ENCODE measurements at regions of chr7 and their contacts with region 1.

Region 1: GRCh38 chr7:151351027-151351426 is 9.4 kb downstream of the NUB1 start:
- DNase-seq: peak; percentile 70
- H3K4me3 Mint-ChIP-seq: peak overlapping the region; percentile 17
- H3K27ac Mint-ChIP-seq: peak overlapping the region; percentile 91
- H3K4me1 Mint-ChIP-seq: peaks cover 51% of the 10 kb centered on the region
- H3K27me3 Mint-ChIP-seq: no peaks in the 10 kb centered on the region

Region 2: GRCh38 chr7:151057989-151058780 is 292.8 kb before region 1 on chr7:
- CTCF ChIA-PET with region 1: no interaction called
- intact Hi-C with region 1: loop called (anchors 1 kb)
- DNase-seq: peak; percentile 98
- H3K4me3 Mint-ChIP-seq: peak overlapping the region; percentile 85
- H3K27ac Mint-ChIP-seq: peak overlapping the region; percentile 89
- H3K4me1 Mint-ChIP-seq: peaks cover 35% of the 10 kb centered on the region
- H3K27me3 Mint-ChIP-seq: no peaks in the 10 kb centered on the region

Region 3: DNA sequence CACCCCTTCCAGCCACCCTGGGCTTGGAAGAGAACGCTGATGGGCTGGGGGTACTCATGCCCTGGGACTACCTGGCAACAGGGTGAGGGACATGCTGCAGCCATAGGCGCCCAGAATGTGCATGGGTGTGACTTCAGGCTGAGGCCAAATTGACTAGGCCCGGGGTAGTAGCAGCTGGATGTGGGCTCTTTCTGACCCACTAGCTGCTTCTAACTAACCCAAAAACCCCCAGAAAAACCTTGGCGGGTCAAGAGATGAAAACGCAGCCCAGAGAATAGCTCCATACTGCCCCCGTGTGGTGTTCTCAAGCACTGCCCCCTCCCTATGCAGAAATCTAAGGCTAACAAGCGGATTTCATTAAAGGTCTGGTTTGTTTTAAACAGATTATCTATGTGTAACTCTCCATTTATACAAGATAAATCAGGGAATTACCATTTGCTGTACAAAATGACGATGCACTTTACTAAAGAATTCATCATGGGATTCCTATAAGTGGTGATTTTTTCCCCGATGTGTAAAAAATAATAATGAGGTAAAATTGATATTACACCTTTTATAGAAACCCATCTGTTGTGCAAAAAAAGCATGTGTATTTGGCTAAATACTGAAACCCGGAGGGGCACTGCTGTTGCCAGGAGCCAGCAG is 106.7 kb before region 1 on chr7:
- CTCF ChIA-PET with region 1: interaction called, 13 read pairs
- intact Hi-C with region 1: loop called (anchors 1 kb)
- DNase-seq: peak; percentile 81
- H3K4me3 Mint-ChIP-seq: peak overlapping the region; percentile 46
- H3K27ac Mint-ChIP-seq: no peak overlapping the region
- H3K4me1 Mint-ChIP-seq: peaks cover 41% of the 10 kb centered on the region
- H3K27me3 Mint-ChIP-seq: peaks cover 26% of the 10 kb centered on the region

Region 4: GRCh38 chr7:151336027-151336708 is 14.9 kb before region 1 on chr7:
- CTCF ChIA-PET with region 1: interaction called, 26 read pairs
- intact Hi-C with region 1: no loop called
- DNase-seq: no peak
- H3K4me3 Mint-ChIP-seq: no peak overlapping the region
- H3K27ac Mint-ChIP-seq: no peak overlapping the region
- H3K4me1 Mint-ChIP-seq: peaks cover 29% of the 10 kb centered on the region
- H3K27me3 Mint-ChIP-seq: no peaks in the 10 kb centered on the region

Region 5: GRCh38 chr7:151491859-151492258 is 140.8 kb after region 1 on chr7:
- CTCF ChIA-PET with region 1: no interaction called
- intact Hi-C with region 1: no loop called
- DNase-seq: no peak
- H3K4me3 Mint-ChIP-seq: no peak overlapping the region
- H3K27ac Mint-ChIP-seq: no peak overlapping the region
- H3K4me1 Mint-ChIP-seq: peaks cover 27% of the 10 kb centered on the region
- H3K27me3 Mint-ChIP-seq: no peaks in the 10 kb centered on the region

Region 6: DNA sequence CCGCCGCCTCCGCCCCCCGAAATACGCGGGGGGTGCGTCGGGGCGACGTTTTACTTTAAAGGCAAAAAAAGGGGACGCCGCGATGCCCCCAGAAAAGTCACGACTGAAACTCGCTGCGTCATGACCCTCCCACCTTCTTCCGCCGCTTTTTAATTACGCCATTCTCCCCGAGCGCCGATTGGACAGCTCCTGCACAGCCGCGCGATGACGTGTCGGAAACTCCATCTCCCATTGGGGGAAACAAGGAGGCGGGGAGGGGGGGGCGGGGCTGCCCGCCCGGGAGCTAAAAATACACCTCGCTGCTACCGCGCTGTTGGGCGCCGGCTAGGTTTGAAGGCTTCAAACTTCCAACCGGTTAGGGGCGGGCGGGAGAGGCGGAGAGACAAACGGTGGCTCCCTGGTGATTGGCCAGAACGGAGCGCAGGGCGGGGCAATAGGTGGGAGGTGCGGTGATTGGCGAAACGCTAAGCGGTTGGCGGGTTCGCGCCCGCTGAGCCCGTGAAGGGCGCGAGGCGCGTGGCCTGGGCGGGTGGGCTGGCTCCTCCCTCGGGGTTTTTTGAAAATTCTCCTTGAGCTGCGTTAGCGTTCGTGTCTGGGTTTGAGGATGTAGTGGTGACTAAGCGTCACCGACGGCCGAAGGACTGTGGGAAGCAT is 168.9 kb after region 1 on chr7 and contains the start of gene RHEB:
- CTCF ChIA-PET with region 1: interaction called, 3 read pairs
- intact Hi-C with region 1: loop called (anchors 1 kb)
- DNase-seq: peak; percentile 99
- H3K4me3 Mint-ChIP-seq: peak within 1 kb of the TSS; percentile 98
- H3K27ac Mint-ChIP-seq: peak within 1 kb of the TSS; percentile 98
- H3K4me1 Mint-ChIP-seq: peaks cover 38% of the 10 kb centered on the region
- H3K27me3 Mint-ChIP-seq: no peaks in the 10 kb centered on the region
- total RNA-seq, gene RHEB: 58.7 to 62.7 TPM

Region 7: DNA sequence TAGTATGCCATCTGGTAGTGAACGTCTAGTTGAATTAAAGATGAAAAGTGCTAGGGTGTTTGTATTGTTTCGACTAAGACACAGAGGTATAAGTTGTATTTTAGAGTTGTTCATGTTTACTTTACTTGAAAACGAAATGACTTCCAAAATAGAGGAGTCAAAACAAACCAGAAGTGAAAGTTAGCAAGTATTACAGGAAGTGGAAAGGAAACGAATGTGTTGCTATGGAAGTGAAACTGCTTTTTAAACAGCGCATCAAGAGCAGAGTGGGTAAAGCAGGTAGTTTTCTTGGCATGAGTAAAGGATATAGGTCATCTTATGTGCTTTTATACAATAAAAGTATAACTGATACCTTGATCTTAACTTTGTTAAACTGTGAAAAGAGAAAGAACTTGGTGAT is 585.2 kb after region 1 on chr7:
- CTCF ChIA-PET with region 1: no interaction called
- intact Hi-C with region 1: loop called (anchors 2 kb)
- DNase-seq: no peak
- H3K4me3 Mint-ChIP-seq: peak overlapping the region; percentile 45
- H3K27ac Mint-ChIP-seq: peak overlapping the region; percentile 73
- H3K4me1 Mint-ChIP-seq: peaks cover 30% of the 10 kb centered on the region
- H3K27me3 Mint-ChIP-seq: no peaks in the 10 kb centered on the region